ENCODE measurements at regions of chr17 and their contacts with region 1.

Region 1: GRCh38 chr17:78734793-78735641 is 47.1 kb downstream of the CYTH1 start:
- DNase-seq: no peak
- H3K4me3 ChIP-seq: peak overlapping the region; percentile 80
- H3K27ac ChIP-seq: peak overlapping the region; percentile 87
- H3K4me1 ChIP-seq: peaks cover 28% of the 10 kb centered on the region
- H3K27me3 ChIP-seq: no peaks in the 10 kb centered on the region
- CTCF ChIP-seq: no peak

Region 2: DNA sequence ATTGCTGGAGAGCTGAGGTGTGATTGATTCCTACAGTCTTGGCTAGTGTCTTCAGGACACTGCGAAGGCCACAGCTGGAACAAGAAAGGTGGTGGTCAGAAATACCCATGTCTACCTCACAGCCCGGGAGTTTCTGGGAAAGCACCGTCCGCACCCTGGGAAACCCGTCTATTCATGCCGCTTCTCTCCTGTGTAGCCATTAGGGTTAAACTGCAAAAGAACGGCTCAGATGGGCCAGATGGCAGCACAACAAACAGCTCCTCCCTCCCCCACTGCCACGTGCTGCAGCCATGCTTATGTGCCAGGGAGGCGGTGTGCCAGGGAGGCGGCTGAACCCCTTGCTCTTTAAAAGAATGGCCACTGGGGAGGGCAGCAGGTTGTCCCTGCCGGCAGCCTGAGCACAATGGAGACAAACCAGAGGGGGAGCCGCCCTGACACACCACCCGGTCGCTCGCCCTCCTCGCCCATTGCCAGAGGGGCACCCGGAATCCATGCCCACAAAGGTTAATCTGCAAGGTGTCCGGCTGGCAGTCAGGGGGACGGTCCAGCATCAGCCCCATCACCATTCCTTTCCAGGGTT is 18.1 kb before region 1 on chr17:
- CTCF ChIA-PET with region 1: interaction called, 15 read pairs
- POLR2A ChIA-PET with region 1: no interaction called
- intact Hi-C with region 1: no loop called
- DNase-seq: no peak
- H3K4me3 ChIP-seq: no peak overlapping the region
- H3K27ac ChIP-seq: no peak overlapping the region
- H3K4me1 ChIP-seq: no peaks in the 10 kb centered on the region
- H3K27me3 ChIP-seq: no peaks in the 10 kb centered on the region
- CTCF ChIP-seq: no peak